CD4-positive, alpha-beta T cell (primary cell): ENCODE measurements at regions of chr5 and their contacts with region 1.

Region 1: DNA sequence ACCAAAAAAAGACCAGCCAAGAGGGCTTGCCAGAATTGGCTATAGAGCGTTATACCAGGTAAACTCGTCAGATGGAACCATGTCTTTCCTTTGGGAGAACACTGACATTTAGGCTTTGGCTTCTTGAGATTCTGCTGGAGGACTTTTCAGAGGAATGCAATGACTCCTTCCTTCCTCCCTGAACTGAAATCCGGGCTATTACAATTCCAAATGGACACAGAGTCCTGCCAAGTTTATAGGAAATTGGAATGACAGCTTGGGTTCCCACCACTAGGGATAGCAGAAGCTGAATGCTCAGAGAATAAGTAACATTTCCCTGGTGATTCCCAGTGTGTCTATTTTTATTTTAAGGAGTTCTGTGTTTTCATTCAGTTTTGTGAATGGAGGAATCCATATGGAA is 143.0 kb downstream of the FGF1 start:
- DNase-seq: no peak
- ATAC-seq: no peak
- H3K4me3 ChIP-seq: no peak overlapping the region
- H3K4me3 Mint-ChIP-seq: no peak overlapping the region
- H3K27ac ChIP-seq: no peak overlapping the region
- H3K27ac Mint-ChIP-seq: no peak overlapping the region
- H3K4me1 ChIP-seq: no peaks in the 10 kb centered on the region
- H3K4me1 Mint-ChIP-seq: no peaks in the 10 kb centered on the region
- H3K27me3 ChIP-seq: peaks cover 0 to 6% of the 10 kb centered on the region in 2 experiments
- H3K27me3 Mint-ChIP-seq: peaks cover 5% of the 10 kb centered on the region
- CTCF ChIP-seq: no peak

Region 2: DNA sequence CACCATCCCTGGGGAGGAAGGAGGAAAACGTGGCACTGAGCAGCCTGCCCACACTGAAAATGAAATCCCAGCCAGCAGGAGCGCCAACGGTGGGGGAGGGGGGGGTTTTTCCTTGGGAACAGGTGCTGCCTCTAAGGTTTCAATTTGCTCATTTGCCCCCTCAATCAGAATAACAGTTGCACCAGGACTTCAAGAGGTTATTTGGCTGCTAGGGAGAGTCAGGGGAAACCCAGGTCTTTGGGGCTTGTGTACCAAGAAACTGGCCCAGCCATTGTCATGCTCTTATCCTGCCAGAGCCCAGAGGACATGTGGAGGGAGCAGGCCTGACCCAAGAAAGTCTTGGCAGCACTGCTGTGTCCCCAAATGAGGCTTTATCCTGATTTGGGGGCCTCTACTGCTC is 367.9 kb before region 1 on chr5:
- CTCF ChIA-PET with region 1: no interaction called
- POLR2A ChIA-PET with region 1: no interaction called
- intact Hi-C with region 1: loop called in 1 of 2 experiments (anchors 1 kb)
- DNase-seq: no peak
- ATAC-seq: no peak
- H3K4me3 ChIP-seq: no peak overlapping the region
- H3K4me3 Mint-ChIP-seq: no peak overlapping the region
- H3K27ac ChIP-seq: no peak overlapping the region
- H3K27ac Mint-ChIP-seq: no peak overlapping the region
- H3K4me1 ChIP-seq: no peaks in the 10 kb centered on the region
- H3K4me1 Mint-ChIP-seq: no peaks in the 10 kb centered on the region
- H3K27me3 ChIP-seq: no peaks in the 10 kb centered on the region
- H3K27me3 Mint-ChIP-seq: no peaks in the 10 kb centered on the region
- CTCF ChIP-seq: no peak

Region 3: DNA sequence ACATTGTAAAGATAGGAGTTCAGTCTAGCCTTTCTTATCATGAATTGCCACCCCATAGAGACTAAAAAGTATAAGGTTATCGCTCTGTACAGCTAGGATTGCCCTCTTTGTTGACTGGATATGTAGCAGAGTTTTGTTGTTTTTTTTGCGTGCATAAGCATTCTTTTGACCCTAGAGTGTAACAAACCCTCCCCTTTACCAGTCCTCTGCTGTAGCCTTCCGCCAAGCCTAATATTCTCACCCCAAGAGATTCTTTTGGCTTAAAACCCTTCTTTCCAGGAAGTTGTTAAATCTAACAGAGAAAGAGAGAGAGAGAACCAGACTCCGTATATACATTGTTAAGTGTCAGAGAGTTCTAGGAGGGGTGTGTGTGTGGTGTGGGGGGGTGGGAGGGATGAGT is 29.1 kb after region 1 on chr5:
- CTCF ChIA-PET with region 1: no interaction called
- POLR2A ChIA-PET with region 1: no interaction called
- intact Hi-C with region 1: no loop called
- DNase-seq: no peak
- ATAC-seq: no peak
- H3K4me3 ChIP-seq: no peak overlapping the region
- H3K4me3 Mint-ChIP-seq: no peak overlapping the region
- H3K27ac ChIP-seq: no peak overlapping the region
- H3K27ac Mint-ChIP-seq: no peak overlapping the region
- H3K4me1 ChIP-seq: no peaks in the 10 kb centered on the region
- H3K4me1 Mint-ChIP-seq: peaks cover 7% of the 10 kb centered on the region
- H3K27me3 ChIP-seq: no peaks in the 10 kb centered on the region
- H3K27me3 Mint-ChIP-seq: no peaks in the 10 kb centered on the region
- CTCF ChIP-seq: no peak